Calu3 (cell line): ENCODE measurements at regions of chr19 and their contacts with region 1.

Region 1: GRCh38 chr19:33040994-33041827 is 23.5 kb downstream of the RHPN2 start:
- DNase-seq: peak; percentile 95
- H3K4me3 Mint-ChIP-seq: peak overlapping the region; percentile 59
- H3K27ac Mint-ChIP-seq: peak overlapping the region; percentile 88
- H3K4me1 Mint-ChIP-seq: peaks cover 69% of the 10 kb centered on the region
- H3K27me3 Mint-ChIP-seq: no peaks in the 10 kb centered on the region
- CTCF ChIP-seq: no peak

Region 2: DNA sequence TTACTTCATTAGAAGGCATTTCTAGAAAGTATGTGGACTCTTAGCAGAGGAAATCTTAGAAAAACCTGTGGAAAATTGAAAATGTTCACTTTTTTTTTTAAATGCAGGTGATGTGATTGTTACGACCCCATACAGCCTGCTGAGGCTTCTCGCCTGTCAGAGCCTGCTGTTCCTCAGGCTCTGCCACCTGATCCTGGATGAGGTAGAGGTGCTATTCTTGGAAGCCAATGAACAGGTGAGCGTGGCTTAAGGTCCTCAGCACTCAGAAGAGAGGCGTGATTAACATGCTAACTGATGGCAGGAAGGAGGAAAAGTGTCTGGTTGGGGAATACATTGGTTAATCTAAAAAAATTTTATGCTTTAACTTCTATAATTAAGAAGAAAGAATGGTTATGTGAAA is 243.0 kb before region 1 on chr19:
- CTCF ChIA-PET with region 1: no interaction called
- intact Hi-C with region 1: no loop called
- DNase-seq: no peak
- H3K4me3 Mint-ChIP-seq: no peak overlapping the region
- H3K27ac Mint-ChIP-seq: no peak overlapping the region
- H3K4me1 Mint-ChIP-seq: no peaks in the 10 kb centered on the region
- H3K27me3 Mint-ChIP-seq: no peaks in the 10 kb centered on the region
- CTCF ChIP-seq: no peak

Region 3: DNA sequence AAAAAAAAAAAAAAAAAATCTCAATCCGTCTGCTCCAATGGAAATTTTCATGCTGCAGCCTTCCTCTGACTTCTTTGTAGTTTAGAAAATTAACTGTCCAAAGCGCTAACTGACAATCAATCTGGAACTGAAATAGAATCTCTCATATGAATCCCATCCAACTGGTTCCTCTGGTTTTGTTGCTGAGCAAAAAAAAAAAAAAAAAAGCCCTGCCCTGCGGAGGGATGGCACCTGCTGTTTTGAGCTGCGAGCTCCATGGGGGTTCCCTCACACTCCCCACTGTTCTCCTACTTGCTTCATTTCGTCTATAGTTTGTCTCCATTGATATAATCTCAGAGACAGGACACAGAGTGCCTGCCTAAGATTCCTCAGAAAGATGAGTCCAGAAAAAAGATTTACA is 35.8 kb before region 1 on chr19:
- CTCF ChIA-PET with region 1: interaction called, 4 read pairs
- intact Hi-C with region 1: loop called (anchors 5 kb)
- DNase-seq: peak; percentile 32
- H3K4me3 Mint-ChIP-seq: peak overlapping the region; percentile 32
- H3K27ac Mint-ChIP-seq: peak overlapping the region; percentile 90
- H3K4me1 Mint-ChIP-seq: peaks cover 27% of the 10 kb centered on the region
- H3K27me3 Mint-ChIP-seq: no peaks in the 10 kb centered on the region
- CTCF ChIP-seq: no peak

Region 4: DNA sequence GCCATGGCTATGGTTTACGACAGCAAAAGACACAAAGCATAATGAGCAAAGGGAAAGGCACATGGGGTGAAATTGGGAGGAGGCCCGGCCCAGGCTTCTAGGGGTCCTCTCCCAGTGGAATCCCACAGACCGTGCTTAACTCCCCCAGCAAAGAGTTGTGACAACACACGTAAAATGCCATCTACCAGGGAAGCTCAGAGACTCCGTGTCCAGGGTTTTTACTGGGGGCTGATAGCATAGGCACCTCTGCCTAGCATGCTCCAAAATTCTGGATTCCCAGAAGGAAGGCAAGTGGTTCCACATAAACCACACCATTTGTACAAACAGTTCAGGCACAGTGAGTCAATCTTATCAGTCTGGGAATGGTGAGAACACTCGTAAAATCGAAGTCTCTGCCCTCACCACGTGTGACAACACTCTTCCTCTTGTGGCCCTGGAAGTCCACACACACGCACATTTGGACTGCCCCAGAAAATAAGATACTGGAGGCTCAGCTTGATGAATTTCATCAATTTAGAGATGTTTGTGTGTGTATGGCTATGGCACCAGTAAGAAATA is 11.4 kb before region 1 on chr19:
- CTCF ChIA-PET with region 1: interaction called, 16 read pairs
- intact Hi-C with region 1: no loop called
- DNase-seq: no peak
- H3K4me3 Mint-ChIP-seq: no peak overlapping the region
- H3K27ac Mint-ChIP-seq: no peak overlapping the region
- H3K4me1 Mint-ChIP-seq: peaks cover 16% of the 10 kb centered on the region
- H3K27me3 Mint-ChIP-seq: no peaks in the 10 kb centered on the region
- CTCF ChIP-seq: no peak

Region 5: DNA sequence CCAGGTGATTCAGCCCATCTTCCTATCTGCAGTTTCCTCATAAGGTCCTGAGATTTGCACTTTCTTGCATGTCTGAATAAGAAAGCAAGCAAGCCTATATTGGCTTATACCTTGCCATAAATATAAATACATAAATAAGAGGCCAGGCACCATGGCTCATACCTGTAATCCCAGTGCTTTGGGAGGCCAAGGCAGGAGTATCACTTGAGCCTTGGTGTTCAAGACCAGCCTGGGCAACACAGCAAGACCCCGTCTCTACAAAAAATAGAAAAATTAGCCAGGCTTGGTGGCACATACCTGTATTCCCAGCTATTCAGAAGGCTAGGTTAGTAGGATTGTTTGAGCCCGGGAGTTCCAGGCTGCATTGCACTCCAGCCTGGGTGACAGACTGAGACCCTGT is 34.3 kb after region 1 on chr19:
- CTCF ChIA-PET with region 1: interaction called, 11 read pairs
- intact Hi-C with region 1: loop called (anchors 5 kb)
- DNase-seq: no peak
- H3K4me3 Mint-ChIP-seq: no peak overlapping the region
- H3K27ac Mint-ChIP-seq: no peak overlapping the region
- H3K4me1 Mint-ChIP-seq: peaks cover 17% of the 10 kb centered on the region
- H3K27me3 Mint-ChIP-seq: no peaks in the 10 kb centered on the region
- CTCF ChIP-seq: no peak

Region 6: DNA sequence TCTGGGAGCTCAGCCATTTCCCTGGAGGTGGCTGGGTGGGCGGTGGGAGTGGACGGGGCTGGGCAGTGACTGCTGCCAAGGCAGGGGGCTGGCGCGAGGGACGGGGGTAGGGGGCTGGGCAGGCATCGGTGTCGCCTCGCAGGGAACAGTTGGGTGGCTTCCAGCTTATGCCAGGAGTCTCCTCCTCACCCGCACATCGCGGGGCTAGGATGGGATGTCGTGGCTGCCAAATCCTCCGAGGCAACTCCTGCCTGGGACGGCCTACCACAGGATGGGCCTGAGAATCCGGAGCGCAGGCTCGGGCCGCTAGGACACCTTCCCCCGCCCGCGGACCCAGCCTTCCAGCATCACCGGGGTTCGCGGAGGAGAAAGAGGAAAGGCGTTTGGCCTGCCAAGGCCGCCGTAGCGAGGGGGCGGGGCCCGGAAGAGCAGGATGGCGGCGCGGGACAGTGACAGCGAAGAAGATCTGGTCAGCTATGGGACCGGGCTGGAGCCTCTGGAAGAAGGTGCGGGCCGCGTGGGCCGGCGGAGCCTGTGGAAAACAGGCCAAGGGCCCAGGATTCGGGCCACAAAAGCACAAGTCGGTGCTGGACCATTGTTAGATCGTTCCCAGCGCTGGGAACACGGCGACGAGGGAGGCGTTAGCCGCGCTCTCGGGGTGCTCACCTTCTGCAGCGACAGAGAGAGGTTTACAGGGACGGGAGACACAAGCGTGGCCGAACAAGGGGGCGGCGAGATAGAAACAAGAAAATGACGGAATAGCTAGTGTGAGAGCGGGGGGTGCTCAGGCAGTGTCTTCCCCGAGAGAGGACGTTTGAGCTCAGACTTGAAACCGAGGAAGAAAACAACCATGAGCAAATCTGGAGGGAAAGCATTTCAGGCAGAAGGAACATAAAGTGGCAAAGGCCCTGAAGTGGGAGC is 39.8 kb after region 1 on chr19 and contains the start of gene GPATCH1:
- CTCF ChIA-PET with region 1: interaction called, 11 read pairs
- intact Hi-C with region 1: loop called (anchors 5 kb)
- DNase-seq: peak; percentile 95
- H3K4me3 Mint-ChIP-seq: peak within 1 kb of the TSS; percentile 95
- H3K27ac Mint-ChIP-seq: peak within 1 kb of the TSS; percentile 70
- H3K4me1 Mint-ChIP-seq: peaks cover 49% of the 10 kb centered on the region
- H3K27me3 Mint-ChIP-seq: no peaks in the 10 kb centered on the region
- CTCF ChIP-seq: no peak
- total RNA-seq, gene GPATCH1: 16.3 and 17.0 TPM in 2 replicates

Region 7: DNA sequence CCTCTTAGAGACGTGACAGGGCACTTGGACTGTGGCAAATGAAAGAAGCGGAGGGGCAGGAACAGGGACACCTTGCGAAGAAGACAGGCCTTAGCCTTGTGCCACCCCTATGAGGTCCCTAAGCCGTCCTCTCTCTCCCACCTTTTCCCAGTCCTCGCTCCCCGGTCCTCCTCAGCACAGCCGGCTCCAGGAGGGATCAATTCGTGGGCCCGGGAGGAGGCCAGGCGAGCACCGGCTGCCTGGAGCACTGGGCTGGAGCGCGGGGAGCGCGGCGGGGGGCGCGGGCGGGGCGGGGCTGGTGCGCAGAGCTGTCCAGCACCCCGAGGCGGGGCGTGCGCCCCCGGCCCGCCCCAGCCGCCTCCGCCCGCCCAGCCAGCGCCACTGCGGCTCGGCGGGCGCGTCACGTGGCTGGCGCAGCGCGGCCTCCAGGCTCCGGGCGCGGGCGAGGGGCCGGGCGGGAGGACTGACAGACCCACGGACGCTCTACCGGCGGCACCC is 152.7 kb after region 1 on chr19 and contains the start of gene LRP3:
- CTCF ChIA-PET with region 1: no interaction called
- intact Hi-C with region 1: no loop called
- DNase-seq: no peak
- H3K4me3 Mint-ChIP-seq: peak within 1 kb of the TSS; percentile 66
- H3K27ac Mint-ChIP-seq: no peak within 1 kb of the TSS
- H3K4me1 Mint-ChIP-seq: no peaks in the 10 kb centered on the region
- H3K27me3 Mint-ChIP-seq: peaks cover 88% of the 10 kb centered on the region
- CTCF ChIP-seq: no peak
- total RNA-seq, gene LRP3: 0.59 and 1.5 TPM in 2 replicates

Region 8: GRCh38 chr19:33394006-33394849 is 353.0 kb after region 1 on chr19:
- CTCF ChIA-PET with region 1: no interaction called
- intact Hi-C with region 1: no loop called
- DNase-seq: no peak
- H3K4me3 Mint-ChIP-seq: no peak overlapping the region
- H3K27ac Mint-ChIP-seq: no peak overlapping the region
- H3K4me1 Mint-ChIP-seq: no peaks in the 10 kb centered on the region
- H3K27me3 Mint-ChIP-seq: no peaks in the 10 kb centered on the region
- CTCF ChIP-seq: no peak